PC-3 (cell line): ENCODE measurements at regions of chr15 and their contacts with region 1.

Region 1: DNA sequence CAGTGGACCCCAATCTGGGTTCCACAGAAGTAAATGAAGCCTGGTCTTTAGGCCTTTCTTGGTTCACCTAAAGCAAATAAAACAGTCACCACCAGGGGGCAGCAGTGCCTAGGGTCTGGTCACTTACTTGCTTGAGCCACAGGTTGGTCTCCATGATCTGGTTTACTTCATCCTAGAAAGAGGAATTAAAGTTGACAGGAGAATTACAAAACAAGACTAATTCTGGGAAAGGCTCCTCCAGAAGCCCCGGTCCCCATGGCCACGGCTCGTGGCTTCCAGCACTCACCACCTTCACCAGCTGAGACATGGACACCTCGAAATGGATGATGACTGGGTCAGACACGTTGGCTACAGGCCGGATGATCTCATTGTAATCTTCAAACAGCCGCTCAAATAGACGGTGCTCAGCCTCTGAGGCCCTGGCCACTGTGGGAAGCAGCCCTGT is 2.3 kb downstream of the CHRNA3 start:
- DNase-seq: peak; percentile 88
- ATAC-seq: peak; percentile 80
- H3K4me3 ChIP-seq: peak overlapping the region; percentile 19; the same call in 1 of the 2 replicates
- H3K27ac ChIP-seq: no peak overlapping the region
- H3K4me1 ChIP-seq: no peaks in the 10 kb centered on the region
- H3K27me3 ChIP-seq: peaks cover 22% of the 10 kb centered on the region
- CTCF ChIP-seq: peak; percentile 90

Region 2: DNA sequence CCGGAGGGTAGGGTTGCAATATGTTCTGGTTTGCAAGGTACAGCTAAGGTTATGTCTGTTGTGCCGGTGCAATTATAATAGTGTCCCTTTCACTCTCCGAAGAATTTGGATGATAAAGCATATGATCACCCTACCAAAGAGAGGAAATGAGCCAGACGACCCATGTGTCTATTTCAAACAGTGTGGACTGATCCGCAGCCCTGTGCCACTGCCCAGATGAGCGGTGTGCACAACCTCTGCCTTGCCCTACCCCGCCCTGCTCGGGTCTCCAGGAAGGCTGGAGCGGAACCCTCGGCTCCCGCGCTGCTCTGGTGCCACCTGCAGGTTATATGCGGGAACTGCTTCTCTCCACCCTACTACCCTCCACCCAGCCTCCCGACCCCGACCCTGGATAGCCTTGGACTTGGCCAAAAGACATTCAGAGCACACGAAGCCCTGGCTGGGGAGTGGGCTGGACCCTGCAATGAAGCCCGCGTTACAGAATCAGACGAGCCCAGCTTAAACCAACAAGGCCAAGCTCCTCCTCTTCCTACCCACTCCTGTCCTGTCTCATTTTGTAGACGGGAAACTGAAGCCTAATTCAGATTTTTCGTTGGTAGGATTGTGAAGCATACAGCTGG is 90.9 kb after region 1 on chr15:
- CTCF ChIA-PET with region 1: no interaction called
- POLR2A ChIA-PET with region 1: no interaction called
- intact Hi-C with region 1: loop called (anchors 1 kb)
- DNase-seq: peak; percentile 74
- ATAC-seq: peak; percentile 99
- H3K4me3 ChIP-seq: peak overlapping the region; percentile 52; the same call in 1 of the 2 replicates
- H3K27ac ChIP-seq: no peak overlapping the region
- H3K4me1 ChIP-seq: no peaks in the 10 kb centered on the region
- H3K27me3 ChIP-seq: peaks cover 8% of the 10 kb centered on the region
- CTCF ChIP-seq: peak; percentile 80

Region 3: DNA sequence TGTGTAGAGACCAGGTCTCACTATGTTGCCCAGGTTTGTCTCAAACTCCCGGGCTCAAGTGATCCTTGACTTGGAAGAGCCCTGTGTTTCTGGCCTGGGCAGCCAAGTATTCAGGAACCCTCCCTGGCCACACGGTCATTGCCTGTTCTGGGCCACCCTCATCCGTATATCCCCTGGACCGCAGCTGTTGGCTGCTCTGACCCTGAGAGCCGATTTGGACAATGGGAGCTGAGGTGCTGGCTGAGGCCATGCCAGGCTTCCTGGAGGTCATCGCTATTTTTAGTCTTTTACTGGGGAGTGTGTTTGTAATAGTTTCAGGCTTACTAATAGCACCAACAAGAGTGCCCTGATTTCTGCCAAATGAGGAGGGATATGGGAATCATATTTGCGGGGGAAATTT is 132.1 kb after region 1 on chr15:
- CTCF ChIA-PET with region 1: no interaction called
- POLR2A ChIA-PET with region 1: no interaction called
- intact Hi-C with region 1: loop called (anchors 2 kb)
- DNase-seq: peak; percentile 10
- ATAC-seq: peak; percentile 58
- H3K4me3 ChIP-seq: peak overlapping the region; percentile 51
- H3K27ac ChIP-seq: no peak overlapping the region
- H3K4me1 ChIP-seq: peaks cover 7% of the 10 kb centered on the region
- H3K27me3 ChIP-seq: no peaks in the 10 kb centered on the region
- CTCF ChIP-seq: no peak